Activated CD4-positive, alpha-beta T cell treated with anti-CD3 and anti-CD28 coated beads for 36 hours (primary cell): ENCODE measurements at regions of chr6 and their contacts with region 1.

Region 1: GRCh38 chr6:88963139-88964090 is at the start of gene RNGTT:
- DNase-seq: peak; percentile 99
- ATAC-seq: peak; percentile 100
- H3K4me3 Mint-ChIP-seq: peak within 1 kb of the TSS; percentile 99
- H3K27ac Mint-ChIP-seq: peak within 1 kb of the TSS; percentile 93
- H3K4me1 Mint-ChIP-seq: peaks cover 45% of the 10 kb centered on the region
- H3K27me3 Mint-ChIP-seq: no peaks in the 10 kb centered on the region
- total RNA-seq, gene RNGTT: 17.5 to 21.5 TPM

Region 2: DNA sequence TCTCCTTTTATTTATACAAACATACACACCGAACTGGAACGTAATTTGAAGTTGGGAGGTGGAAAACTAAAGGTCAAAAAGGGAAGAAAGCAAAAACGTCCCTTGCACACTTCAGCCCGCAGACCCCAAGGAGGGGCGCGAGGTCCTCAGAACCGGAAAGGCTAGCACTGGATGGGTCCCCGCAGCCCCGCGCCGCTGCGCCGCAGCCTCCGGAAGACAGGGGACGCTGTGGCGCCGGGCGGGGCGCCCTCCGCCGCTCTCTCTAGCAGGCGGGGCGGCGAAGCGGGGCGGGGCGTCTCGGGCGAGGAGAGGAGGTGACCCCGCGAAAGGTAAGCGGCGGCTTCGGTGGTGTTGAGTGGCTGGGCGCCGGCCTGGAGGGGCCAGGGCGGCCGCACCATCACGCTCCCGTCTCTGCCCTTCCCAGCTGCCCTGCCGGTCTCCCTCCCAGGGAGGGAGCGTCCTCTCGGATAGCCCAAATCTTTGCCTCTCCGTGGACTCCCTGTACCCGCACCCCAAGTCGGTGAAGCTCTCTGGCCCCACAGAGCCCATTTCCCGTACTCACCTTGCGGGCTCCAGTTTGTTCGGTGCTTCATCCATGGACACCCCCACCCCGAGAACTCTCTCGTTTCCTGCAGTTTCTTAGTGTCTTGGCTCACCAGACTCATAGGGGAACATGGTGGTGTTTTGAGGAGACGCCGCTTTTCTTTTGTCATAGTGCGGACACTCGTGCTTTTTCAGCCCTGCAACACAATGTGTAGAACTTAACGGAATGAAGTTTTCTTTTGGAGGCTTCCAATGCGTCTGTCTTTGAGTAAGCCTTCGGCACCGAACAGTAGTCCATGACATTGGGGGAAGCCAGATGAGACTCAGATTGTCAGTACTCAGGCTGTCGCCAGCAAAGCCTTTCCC is 1640.9 kb before region 1 on chr6 and contains the start of gene SMIM8:
- CTCF ChIA-PET with region 1: no interaction called
- POLR2A ChIA-PET with region 1: no interaction called
- intact Hi-C with region 1: loop called in 1 of 2 experiments (anchors 10 kb)
- DNase-seq: peak; percentile 94
- ATAC-seq: peak; percentile 100
- H3K4me3 Mint-ChIP-seq: peak within 1 kb of the TSS; percentile 92
- H3K27ac Mint-ChIP-seq: peak within 1 kb of the TSS; percentile 94
- H3K4me1 Mint-ChIP-seq: peaks cover 16% of the 10 kb centered on the region
- H3K27me3 Mint-ChIP-seq: no peaks in the 10 kb centered on the region
- total RNA-seq, gene SMIM8: 8.5 to 10.1 TPM

Region 3: DNA sequence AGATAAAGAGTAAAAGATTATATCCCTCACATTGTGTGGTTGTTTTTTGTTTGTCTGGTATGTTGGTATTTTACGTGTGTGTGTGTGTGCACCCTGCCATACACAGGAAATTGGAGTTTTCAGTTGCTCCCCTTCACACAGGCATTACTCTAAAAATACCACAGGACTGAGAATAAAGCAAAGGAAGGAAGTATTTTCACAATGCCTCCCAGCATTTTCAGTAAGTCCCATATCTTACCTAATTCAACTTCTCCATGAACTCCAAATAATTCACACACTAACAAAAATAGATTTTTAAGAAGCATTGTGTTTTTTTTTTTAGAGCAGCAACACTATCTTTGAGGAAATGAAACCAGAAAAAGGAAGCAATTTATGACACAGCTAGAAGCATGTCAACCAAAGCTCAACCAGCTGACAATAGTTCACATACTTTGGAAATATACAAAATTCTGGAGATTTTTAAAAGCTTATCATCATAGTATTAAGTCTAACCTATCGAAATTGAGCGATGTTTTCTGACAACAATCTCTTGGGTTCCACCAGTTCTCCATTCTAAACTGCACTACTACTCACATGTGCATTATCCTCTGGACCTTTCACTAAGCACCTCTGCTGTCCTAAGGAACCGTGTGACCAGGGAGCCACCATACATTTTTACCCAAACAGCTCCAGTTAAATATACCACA is 387.0 kb after region 1 on chr6:
- CTCF ChIA-PET with region 1: no interaction called
- POLR2A ChIA-PET with region 1: no interaction called
- intact Hi-C with region 1: no loop called
- DNase-seq: no peak
- ATAC-seq: no peak
- H3K4me3 Mint-ChIP-seq: peak overlapping the region; percentile 91
- H3K27ac Mint-ChIP-seq: peak overlapping the region; percentile 97
- H3K4me1 Mint-ChIP-seq: peaks cover 57% of the 10 kb centered on the region
- H3K27me3 Mint-ChIP-seq: no peaks in the 10 kb centered on the region

Region 4: GRCh38 chr6:89360415-89360999 is 397.1 kb after region 1 on chr6:
- CTCF ChIA-PET with region 1: no interaction called
- POLR2A ChIA-PET with region 1: no interaction called
- intact Hi-C with region 1: loop called in 1 of 2 experiments (anchors 1 kb)
- DNase-seq: no peak
- ATAC-seq: peak; percentile 87
- H3K4me3 Mint-ChIP-seq: no peak overlapping the region
- H3K27ac Mint-ChIP-seq: peak overlapping the region; percentile 53
- H3K4me1 Mint-ChIP-seq: peaks cover 62% of the 10 kb centered on the region
- H3K27me3 Mint-ChIP-seq: no peaks in the 10 kb centered on the region

Region 5: DNA sequence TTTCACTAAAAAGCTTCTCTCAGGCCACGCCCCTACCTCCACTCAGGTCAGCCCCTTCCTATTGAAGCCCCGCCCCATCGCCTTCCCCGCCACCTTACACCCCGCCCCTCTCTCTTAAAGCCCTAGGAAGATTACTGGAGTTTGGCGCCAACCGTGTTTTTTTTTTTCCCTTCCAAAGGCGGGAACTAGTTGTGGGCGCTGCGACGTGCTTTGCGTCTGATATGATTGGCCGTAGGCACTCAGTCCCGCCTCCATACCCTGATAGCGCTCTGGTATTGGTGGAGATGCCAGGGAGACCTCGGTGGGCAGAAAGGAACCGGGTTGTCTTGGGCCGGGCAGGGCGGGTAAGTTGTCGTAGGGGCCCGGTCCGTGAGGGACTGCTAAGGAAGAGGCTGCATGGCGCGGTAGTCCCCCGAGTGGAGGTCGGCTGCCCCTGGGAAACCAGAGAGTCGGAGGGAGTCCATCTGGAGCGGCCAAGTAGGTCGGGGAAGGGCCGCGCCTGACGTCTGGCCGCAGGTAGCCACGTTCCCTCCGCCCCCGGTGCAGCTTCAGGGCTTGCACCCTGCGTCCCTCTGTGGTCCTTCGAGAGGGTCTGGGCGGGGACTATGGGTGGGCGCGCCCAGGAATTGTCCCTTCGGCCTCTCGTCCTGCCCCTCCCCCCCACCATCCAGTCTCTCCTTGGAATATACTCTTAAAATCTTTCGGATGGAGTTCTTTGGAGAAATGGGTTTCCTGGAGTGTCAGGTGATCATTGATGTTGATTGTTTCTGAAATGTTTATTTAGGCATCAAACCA is 866.4 kb after region 1 on chr6 and contains the start of gene CASP8AP2:
- CTCF ChIA-PET with region 1: no interaction called
- POLR2A ChIA-PET with region 1: no interaction called
- intact Hi-C with region 1: loop called in 1 of 2 experiments (anchors 1 kb)
- DNase-seq: peak; percentile 98
- ATAC-seq: peak; percentile 96
- H3K4me3 Mint-ChIP-seq: peak within 1 kb of the TSS; percentile 97
- H3K27ac Mint-ChIP-seq: peak within 1 kb of the TSS; percentile 92
- H3K4me1 Mint-ChIP-seq: peaks cover 33% of the 10 kb centered on the region
- H3K27me3 Mint-ChIP-seq: no peaks in the 10 kb centered on the region
- total RNA-seq, gene CASP8AP2: 34.0 to 36.5 TPM